ENCODE measurements at regions of chrX and their contacts with region 1.

Region 1: DNA sequence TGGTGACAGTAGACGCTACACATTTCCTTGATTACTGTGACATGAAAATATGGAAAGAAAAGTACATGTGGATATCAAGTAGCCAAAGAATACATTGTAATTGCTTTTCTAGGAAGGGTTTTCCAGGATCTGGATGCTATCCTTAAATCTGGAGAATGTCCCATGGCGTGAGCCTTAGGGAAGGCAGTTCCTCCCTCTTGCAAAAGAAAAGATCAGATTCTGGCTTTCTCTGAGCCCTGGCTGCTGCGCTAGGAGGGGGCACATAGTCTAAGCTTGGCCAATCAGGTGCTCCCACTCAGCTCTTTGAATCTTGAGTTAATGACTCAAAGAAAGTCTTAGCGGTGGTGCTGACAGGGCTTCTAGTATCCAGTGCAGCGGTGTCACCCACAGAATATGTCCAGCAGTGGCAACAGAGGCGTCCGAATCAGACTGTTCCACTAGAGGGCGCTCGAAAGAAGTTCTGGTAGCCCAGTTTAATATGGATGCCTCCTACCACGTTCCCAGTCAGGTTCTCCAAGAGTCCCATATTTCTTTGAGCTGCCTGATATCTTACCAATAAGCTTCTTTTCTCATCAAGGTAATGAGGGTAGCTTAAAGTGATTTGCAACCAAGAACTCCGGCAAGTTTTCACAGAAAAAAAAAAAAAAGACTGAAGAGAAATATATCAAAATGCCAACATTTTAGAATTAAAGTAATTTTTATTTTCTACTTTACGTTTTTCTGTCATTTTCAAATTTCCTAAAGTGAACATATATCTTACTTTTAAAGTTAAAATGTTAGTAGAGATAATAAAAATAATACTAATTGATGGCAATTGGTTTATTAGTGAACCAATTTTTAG is 213.4 kb upstream of the S100G start:
- DNase-seq: peak; percentile 14 to 85
- H3K4me3 ChIP-seq: no peak overlapping the region
- H3K27ac ChIP-seq: no peak overlapping the region
- H3K4me1 ChIP-seq: no peaks in the 10 kb centered on the region
- H3K27me3 ChIP-seq: no peaks in the 10 kb centered on the region
- CTCF ChIP-seq: peak; percentile 38 to 61 (median 51)

Region 2: DNA sequence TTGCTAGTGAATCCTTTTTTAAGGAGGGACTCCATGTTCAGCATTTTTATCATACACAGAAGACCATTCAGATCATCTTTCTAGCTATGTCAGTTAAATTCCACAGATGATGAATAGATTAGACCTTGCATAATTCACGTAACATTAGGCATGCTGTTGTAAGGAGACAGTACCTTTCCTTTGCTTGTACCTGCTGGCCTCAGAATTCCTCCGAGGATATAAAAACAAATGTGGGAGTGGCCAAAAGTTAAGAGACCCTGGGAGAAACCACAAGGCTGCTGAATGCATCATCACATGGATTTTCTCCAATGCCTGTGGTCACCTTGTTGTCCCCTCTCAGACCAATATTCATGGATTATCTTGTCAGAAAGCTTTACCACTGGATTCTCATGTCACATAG is 67.9 kb before region 1 on chrX:
- intact Hi-C with region 1: no loop called
- DNase-seq: no peak
- H3K4me3 ChIP-seq: no peak overlapping the region
- H3K27ac ChIP-seq: no peak overlapping the region
- H3K4me1 ChIP-seq: no peaks in the 10 kb centered on the region
- H3K27me3 ChIP-seq: no peaks in the 10 kb centered on the region
- CTCF ChIP-seq: no peak

Region 3: GRCh38 chrX:16585486-16586376 is 149.2 kb after region 1 on chrX:
- intact Hi-C with region 1: no loop called
- DNase-seq: no peak
- H3K4me3 ChIP-seq: no peak overlapping the region
- H3K27ac ChIP-seq: no peak overlapping the region
- H3K4me1 ChIP-seq: no peaks in the 10 kb centered on the region
- H3K27me3 ChIP-seq: no peaks in the 10 kb centered on the region
- CTCF ChIP-seq: no peak

Region 4: GRCh38 chrX:16658284-16658683 is 221.7 kb after region 1 on chrX:
- intact Hi-C with region 1: loop called (anchors 10 kb)
- DNase-seq: no peak
- H3K4me3 ChIP-seq: no peak overlapping the region
- H3K27ac ChIP-seq: no peak overlapping the region
- H3K4me1 ChIP-seq: no peaks in the 10 kb centered on the region
- H3K27me3 ChIP-seq: no peaks in the 10 kb centered on the region
- CTCF ChIP-seq: no peak

Measured in ascending aorta (tissue), 2 donors.